ENCODE measurements at regions of chr7 and their contacts with region 1.

Region 1: DNA sequence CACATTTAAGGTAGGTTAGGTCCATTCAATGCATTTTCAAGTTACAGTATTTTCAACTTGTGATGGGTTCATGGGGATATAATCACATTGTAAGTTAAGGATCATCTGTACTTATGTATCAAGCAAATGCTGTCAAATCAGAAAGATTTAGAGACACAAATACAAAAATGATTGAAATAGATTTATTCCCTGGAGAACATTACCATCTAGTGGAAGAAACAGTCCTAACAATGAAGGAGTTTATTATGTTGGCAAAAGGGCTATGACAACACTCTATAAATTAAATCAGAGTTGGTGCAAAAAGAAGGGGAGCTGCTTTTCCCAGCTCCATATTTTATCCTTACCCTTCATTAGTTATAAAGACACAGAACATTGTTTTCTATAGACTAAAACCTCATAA is 69.0 kb downstream of the PRSS58 start:
- DNase-seq: peak; percentile 27
- H3K4me3 Mint-ChIP-seq: no peak overlapping the region
- H3K27ac Mint-ChIP-seq: no peak overlapping the region
- H3K4me1 Mint-ChIP-seq: no peaks in the 10 kb centered on the region
- H3K27me3 Mint-ChIP-seq: peaks cover 26% of the 10 kb centered on the region
- CTCF ChIP-seq: peak; percentile 38

Region 2: DNA sequence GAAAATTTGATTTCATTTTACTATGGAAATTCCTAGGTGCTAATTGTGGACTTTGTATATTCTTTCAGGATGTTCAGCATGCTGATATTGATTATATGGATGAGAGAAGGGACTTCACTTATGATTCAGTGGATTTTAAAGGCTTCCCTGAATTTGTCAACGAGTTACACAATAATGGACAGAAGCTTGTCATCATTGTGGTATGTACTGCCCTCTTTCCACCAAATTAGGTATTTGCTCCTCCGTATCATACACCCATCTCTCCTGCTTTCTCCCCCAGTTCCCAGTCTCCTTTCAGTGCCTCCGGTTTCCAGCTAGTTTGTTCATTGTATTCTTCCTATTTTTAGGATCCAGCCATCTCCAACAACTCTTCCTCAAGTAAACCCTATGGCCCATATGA is 158.6 kb before region 1 on chr7:
- CTCF ChIA-PET with region 1: interaction called, 4 read pairs
- POLR2A ChIA-PET with region 1: no interaction called
- intact Hi-C with region 1: loop called (anchors 10 kb)
- DNase-seq: peak; percentile 56
- H3K4me3 Mint-ChIP-seq: no peak overlapping the region
- H3K27ac Mint-ChIP-seq: peak overlapping the region; percentile 3
- H3K4me1 Mint-ChIP-seq: peaks cover 24% of the 10 kb centered on the region
- H3K27me3 Mint-ChIP-seq: no peaks in the 10 kb centered on the region
- CTCF ChIP-seq: peak; percentile 35

Region 3: DNA sequence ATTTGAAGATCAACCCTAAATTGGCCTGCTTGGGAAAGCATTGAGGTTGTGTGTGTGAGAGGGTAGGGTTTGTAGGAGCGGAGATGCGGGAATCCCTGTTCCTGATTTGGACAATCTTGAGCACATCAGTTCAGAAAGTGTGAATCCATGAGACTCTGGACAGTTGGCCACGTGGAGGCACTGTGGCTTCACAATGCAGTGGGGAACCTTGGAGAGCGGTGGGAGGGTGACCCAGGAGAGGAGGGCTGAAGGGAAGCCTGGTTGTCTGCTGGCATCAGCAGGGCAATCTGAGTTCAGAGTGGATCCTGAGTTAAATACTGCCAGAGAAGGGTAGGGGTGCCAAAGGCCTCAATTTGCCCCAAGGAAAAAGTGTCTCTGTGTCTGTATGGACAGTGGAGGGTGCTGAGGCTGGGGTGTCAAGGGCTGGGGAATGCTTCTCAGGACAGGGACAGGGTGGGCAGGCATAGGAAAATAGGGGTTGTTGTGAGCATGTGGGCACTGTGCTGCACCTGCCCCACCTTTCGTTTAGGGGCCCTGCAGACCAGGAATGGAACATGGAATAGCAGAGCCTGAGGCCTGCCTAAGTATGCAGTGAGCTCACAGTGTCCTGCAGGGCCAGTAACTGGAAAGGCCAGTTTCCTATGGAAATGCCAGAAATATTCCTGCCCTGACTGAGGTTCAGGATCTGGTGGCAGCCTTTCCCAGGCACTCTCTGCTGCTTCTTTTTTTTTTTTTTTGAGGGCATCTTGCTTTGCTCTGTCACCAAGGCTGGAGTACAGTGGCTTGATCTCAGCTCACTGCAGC is 231.9 kb after region 1 on chr7:
- CTCF ChIA-PET with region 1: no interaction called
- POLR2A ChIA-PET with region 1: no interaction called
- intact Hi-C with region 1: no loop called
- DNase-seq: peak; percentile 34
- H3K4me3 Mint-ChIP-seq: no peak overlapping the region
- H3K27ac Mint-ChIP-seq: no peak overlapping the region
- H3K4me1 Mint-ChIP-seq: no peaks in the 10 kb centered on the region
- H3K27me3 Mint-ChIP-seq: peaks cover 13% of the 10 kb centered on the region
- CTCF ChIP-seq: peak; percentile 10